ENCODE measurements at regions of chr12 and their contacts with region 1.

Region 1: DNA sequence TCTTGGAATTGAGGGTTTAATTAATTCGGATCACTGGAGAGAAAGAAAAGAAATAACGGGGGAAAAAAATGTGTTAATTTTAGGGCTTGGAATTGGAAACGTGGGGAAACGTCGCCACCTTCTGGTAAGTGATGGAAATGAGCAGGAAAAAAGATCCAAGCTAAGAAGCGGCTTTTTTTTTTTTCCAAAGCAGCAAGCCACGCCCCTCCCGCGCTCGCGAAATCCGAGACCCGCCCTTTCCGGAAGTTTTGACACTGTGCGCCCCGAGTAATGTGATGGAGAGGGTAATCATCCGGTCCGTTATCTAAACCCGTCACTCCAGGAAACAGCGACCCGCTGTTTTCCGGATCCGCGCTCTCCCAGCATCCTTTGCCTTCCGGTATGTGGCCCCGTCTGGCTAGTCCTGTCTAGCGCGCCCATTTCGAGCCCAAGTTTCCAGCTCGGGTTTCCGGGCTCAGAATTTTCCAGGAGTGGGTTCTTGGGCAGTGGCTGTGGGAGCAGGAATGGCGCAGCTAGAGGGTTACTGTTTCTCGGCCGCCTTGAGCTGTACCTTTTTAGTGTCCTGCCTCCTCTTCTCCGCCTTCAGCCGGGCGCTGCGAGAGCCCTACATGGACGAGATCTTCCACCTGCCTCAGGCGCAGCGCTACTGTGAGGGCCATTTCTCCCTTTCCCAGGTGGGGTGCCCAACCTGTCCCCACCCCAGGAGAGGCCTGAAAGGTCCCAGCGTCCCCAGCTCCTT is at the start of gene ALG10B:
- DNase-seq: peak; percentile 92 to 96
- H3K4me3 ChIP-seq: peak within 1 kb of the TSS; percentile 63 to 84
- H3K27ac ChIP-seq: peak within 1 kb of the TSS; percentile 83 to 84
- H3K4me1 ChIP-seq: peaks cover 0 to 15% (median 6%) of the 10 kb centered on the region in 4 donors
- H3K27me3 ChIP-seq: no peaks in the 10 kb centered on the region
- CTCF ChIP-seq: peak; percentile 52 to 74

Region 2: DNA sequence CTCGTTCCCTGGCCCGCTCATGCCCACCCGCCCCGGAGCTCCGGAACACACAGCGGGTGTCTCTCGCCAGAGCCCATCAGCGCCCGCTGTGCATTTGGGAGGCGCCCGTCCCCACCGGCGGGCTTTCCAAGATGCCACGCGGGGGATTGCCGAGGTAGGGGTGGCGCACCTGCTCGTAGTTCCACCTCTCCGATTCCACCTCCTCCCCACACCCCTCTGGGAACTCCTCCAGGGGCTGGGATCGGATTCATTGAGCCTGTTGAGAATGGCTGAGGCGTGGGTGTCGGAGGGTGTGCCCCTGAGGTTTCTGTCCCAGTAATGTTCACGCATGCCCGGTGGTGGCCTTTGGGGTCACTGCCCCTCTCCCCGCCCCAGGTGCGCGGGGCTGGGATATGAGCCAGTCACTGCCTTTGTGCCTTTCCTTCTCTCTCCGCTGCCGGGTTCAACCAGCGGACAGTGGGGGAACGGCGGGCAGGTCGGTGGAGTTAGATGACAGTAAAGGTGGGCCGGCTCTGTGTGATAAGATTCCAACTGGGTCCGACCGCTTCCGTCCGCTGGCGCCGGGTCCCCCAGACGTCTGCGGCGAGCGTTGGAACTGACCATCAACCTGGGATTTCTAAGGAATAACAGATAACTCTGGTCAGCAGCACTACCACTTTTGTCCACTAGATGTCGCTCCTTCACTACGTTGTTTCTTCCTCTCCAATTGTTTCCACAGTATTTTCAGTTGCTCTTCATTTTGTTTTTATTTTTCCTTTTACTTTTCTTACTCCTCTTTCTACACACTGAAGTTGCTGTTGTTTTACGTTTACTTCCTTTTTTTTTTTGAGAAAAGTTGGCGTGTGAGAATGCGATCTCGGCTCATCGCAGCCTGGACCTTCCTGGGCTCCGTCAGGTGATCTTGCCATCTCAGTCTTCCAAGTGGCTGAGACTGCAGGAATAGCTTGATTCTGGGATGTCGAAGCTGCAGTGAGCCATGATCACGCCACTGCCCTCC is 178.0 kb before region 1 on chr12:
- intact Hi-C with region 1: loop called (anchors 5 kb)
- DNase-seq: peak in 1 of 2 donors; percentile 72
- H3K4me3 ChIP-seq: peak overlapping the region; percentile 20 to 28
- H3K27ac ChIP-seq: no peak overlapping the region
- H3K4me1 ChIP-seq: peaks cover 0 to 13% (median 6%) of the 10 kb centered on the region in 4 donors
- H3K27me3 ChIP-seq: peaks cover 0 to 20% of the 10 kb centered on the region in 2 donors
- CTCF ChIP-seq: peak; percentile 91 to 97

Region 3: GRCh38 chr12:38664661-38665269 is 348.2 kb after region 1 on chr12:
- intact Hi-C with region 1: no loop called
- DNase-seq: no peak
- H3K4me3 ChIP-seq: no peak overlapping the region
- H3K27ac ChIP-seq: no peak overlapping the region
- H3K4me1 ChIP-seq: no peaks in the 10 kb centered on the region
- H3K27me3 ChIP-seq: no peaks in the 10 kb centered on the region
- CTCF ChIP-seq: no peak